CD14-positive monocyte (primary cell): ENCODE measurements at regions of chr3 and their contacts with region 1.

Region 1: DNA sequence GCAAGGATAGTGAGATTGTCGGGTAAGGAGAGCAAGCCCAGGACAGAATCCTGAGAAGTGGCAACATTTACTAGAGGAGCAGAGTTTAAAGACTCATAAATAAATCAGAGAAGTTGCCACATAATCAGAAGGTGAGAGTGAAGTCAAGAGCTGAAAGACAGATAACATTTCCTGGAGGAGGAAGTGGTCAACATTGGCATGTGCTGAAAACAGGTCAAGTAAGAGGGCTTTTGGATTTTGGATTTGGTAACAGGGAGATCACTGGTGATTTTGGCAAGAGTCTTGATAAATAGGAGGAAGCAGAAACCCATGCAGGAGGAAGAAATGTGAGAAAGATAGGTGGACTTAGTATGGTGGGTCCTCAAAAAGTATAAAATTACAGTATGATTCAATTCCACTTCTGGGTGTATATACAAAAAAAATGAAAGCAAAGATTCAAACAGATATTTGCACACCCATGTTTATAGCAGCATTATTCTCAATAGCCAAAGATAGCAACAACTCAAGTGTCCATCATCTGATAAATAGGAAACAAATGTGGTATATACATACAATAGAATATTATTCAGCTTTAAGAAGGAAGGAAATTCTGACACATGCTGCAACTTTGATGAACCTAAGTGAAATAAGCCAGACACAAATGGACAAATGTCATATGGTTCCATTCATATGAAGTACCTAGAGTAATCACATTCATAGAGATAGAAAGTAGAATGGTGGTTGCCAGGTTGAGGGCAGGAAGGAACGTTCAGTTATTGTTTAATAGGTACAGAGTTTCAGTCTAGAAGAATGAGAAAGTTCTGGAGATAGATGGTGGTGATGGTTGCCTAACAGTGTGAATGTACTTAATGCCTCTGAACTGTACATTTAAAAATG is 27.3 kb upstream of the MBNL1 start:
- DNase-seq: peak in 2 of 3 donors; percentile 43 to 59
- H3K4me3 ChIP-seq: peak overlapping the region in 1 of 3 experiments; percentile 11
- H3K4me3 Mint-ChIP-seq: no peak overlapping the region
- H3K27ac ChIP-seq: peak overlapping the region in 1 of 2 donors; percentile 88
- H3K27ac Mint-ChIP-seq: peak overlapping the region; percentile 54 to 96 (median 93)
- H3K4me1 ChIP-seq: peaks cover 38 to 51% of the 10 kb centered on the region in 2 donors
- H3K4me1 Mint-ChIP-seq: peaks cover 44% of the 10 kb centered on the region
- H3K27me3 ChIP-seq: no peaks in the 10 kb centered on the region
- H3K27me3 Mint-ChIP-seq: no peaks in the 10 kb centered on the region
- CTCF ChIP-seq: no peak

Region 2: DNA sequence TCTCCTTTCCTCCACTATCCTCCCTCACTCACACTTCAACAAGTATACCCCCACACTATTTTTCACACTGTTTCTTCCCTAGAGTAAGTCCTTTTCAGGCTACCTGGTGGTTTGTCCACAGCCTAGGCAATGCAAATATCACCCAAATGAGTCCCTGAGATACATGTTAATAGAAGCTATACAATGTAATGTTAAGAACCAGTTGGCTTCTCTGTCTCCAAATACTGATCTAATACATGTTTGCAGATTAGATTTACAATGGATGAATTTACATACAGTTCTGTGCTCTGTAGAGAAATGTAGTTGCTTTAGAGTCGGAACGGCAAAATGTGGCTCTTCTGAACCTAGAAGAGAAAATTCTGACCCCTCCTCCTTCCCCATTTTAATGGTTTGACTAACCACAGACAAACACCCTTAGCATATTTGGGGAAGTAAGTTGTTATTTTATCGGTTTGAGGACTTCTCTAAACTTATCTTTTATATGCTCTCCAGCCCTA is 36.2 kb before region 1 on chr3:
- intact Hi-C with region 1: loop called in 1 of 2 experiments (anchors 5 kb)
- DNase-seq: peak; percentile 73 to 91 (median 83)
- H3K4me3 ChIP-seq: peak overlapping the region; percentile 76 to 100 (median 92)
- H3K4me3 Mint-ChIP-seq: peak overlapping the region; percentile 84 to 99
- H3K27ac ChIP-seq: peak overlapping the region; percentile 45 to 89
- H3K27ac Mint-ChIP-seq: peak overlapping the region; percentile 92 to 99 (median 97)
- H3K4me1 ChIP-seq: peaks cover 22 to 50% of the 10 kb centered on the region in 2 donors
- H3K4me1 Mint-ChIP-seq: peaks cover 32% of the 10 kb centered on the region
- H3K27me3 ChIP-seq: no peaks in the 10 kb centered on the region
- H3K27me3 Mint-ChIP-seq: no peaks in the 10 kb centered on the region
- CTCF ChIP-seq: no peak

Region 3: DNA sequence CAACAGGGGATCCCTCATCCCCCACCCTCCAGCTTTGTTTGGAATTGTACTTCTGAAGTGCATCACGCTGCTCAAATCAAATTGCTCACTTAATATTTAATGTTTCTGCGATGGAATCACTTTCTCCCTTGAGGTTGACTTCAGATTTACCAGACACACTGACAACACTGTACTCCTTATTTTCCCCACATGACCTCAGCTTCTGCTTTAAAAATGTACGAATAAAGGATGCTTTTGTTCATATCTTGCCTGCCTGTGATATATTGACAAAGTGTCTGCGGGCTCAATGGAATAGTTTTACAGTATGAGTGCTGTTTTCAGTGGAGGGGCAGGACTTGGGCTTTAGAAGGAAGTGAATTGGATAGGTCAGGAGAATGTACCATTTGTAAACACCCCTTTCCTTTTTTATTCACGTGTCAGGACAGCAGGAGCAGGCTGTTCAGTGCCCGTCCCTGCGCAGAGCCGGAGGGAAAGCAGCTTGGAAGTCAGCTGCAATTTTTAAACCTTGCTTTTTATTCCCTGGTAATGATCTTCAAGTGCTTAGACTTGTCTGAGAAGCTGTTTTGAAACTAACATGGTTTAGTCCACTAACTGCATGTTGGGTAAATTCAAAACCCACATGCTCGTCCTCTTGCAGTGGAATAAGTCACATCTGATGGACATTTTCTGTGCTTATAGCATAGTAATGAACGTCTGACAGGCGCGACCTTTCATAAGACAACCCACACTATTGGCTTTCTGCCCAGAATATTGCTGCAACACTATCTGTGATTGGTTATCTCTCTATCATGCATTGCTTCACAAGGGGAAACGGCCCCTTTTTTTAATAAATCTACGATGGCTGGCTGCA is 57.2 kb after region 1 on chr3:
- intact Hi-C with region 1: loop called in 1 of 2 experiments (anchors 10 kb)
- DNase-seq: peak; percentile 89 to 98 (median 93)
- H3K4me3 ChIP-seq: peak overlapping the region; percentile 7 to 73 (median 68)
- H3K4me3 Mint-ChIP-seq: peak overlapping the region; percentile 74 to 85
- H3K27ac ChIP-seq: peak overlapping the region; percentile 66 to 90
- H3K27ac Mint-ChIP-seq: peak overlapping the region; percentile 95 to 99 (median 97)
- H3K4me1 ChIP-seq: peaks cover 51 to 79% of the 10 kb centered on the region in 2 donors
- H3K4me1 Mint-ChIP-seq: peaks cover 71% of the 10 kb centered on the region
- H3K27me3 ChIP-seq: no peaks in the 10 kb centered on the region
- H3K27me3 Mint-ChIP-seq: no peaks in the 10 kb centered on the region
- CTCF ChIP-seq: no peak

Region 4: DNA sequence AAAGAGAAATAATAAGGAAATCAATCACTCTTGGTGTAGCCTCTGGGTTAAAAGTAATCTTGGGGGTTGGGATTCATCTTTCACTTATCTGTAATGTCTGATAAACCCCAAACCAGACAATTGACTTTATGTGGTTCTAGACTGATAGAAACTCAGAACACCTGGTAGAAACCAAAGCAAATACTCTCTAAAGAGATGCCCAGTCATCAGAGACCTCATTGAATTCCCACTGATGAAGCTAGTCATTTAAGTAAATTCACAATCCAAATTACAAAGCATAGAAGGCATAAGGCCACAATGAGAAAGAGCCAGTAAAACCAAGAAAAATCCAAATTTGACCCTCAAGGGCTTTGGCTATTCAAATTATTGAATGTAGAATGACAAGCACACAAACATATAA is 278.0 kb after region 1 on chr3:
- intact Hi-C with region 1: no loop called
- DNase-seq: no peak
- H3K4me3 ChIP-seq: no peak overlapping the region
- H3K4me3 Mint-ChIP-seq: no peak overlapping the region
- H3K27ac ChIP-seq: no peak overlapping the region
- H3K27ac Mint-ChIP-seq: no peak overlapping the region
- H3K4me1 ChIP-seq: no peaks in the 10 kb centered on the region
- H3K4me1 Mint-ChIP-seq: no peaks in the 10 kb centered on the region
- H3K27me3 ChIP-seq: no peaks in the 10 kb centered on the region
- H3K27me3 Mint-ChIP-seq: peaks cover 0 to 1% (median 0%) of the 10 kb centered on the region in 3 donors
- CTCF ChIP-seq: no peak